ENCODE measurements at regions of chr15 and their contacts with region 1.

Region 1: DNA sequence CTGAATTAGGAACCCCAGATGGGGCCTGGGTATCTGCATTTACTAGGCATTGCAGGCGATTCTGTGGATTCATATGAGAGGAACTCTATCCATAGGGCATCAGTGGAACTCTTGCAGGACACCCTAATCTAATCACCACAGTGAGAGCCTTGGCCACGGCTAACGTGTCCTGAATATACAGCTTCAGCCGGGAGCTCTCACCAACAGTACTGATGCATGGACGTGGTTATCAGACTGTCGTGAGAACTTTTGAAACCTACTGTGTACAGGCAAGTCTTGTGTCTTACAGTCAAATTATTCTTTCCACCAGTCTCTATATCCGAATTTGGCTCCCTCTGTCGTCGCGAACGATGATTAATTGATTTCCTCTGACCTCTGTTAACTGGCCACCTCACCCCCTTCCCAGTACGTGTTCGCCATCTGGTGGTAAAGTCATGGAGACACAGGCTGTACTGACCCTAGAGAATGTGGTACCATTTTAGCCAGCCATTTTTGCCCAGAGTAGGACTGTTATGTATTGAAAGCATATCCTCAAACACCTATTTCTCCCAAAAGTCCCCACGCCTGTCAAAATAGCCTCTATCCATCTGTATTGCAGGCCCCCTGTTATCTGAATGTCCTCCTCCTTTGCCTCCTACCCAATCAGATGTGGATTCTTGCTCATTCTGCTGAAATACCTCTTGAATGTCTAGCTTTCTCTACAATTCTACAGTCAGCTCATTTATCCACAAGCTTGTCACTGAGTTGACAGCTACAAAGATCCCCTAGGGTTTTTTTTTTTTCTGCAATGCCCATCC is 39.7 kb downstream of the GLDN start:
- DNase-seq: peak; percentile 72
- H3K4me3 Mint-ChIP-seq: no peak overlapping the region
- H3K27ac Mint-ChIP-seq: no peak overlapping the region
- H3K4me1 Mint-ChIP-seq: no peaks in the 10 kb centered on the region
- H3K27me3 Mint-ChIP-seq: peaks cover 83% of the 10 kb centered on the region
- CTCF ChIP-seq: peak; percentile 82

Region 2: GRCh38 chr15:51162865-51163762 is 218.1 kb before region 1 on chr15:
- CTCF ChIA-PET with region 1: interaction called, 23 read pairs
- intact Hi-C with region 1: loop called (anchors 1 kb)
- DNase-seq: peak; percentile 78
- H3K4me3 Mint-ChIP-seq: no peak overlapping the region
- H3K27ac Mint-ChIP-seq: no peak overlapping the region
- H3K4me1 Mint-ChIP-seq: no peaks in the 10 kb centered on the region
- H3K27me3 Mint-ChIP-seq: peaks cover 70% of the 10 kb centered on the region
- CTCF ChIP-seq: peak; percentile 92

Region 3: GRCh38 chr15:51229907-51230330 is 151.3 kb before region 1 on chr15:
- CTCF ChIA-PET with region 1: interaction called, 7 read pairs
- intact Hi-C with region 1: loop called (anchors 1 kb)
- DNase-seq: no peak
- H3K4me3 Mint-ChIP-seq: no peak overlapping the region
- H3K27ac Mint-ChIP-seq: no peak overlapping the region
- H3K4me1 Mint-ChIP-seq: peaks cover 13% of the 10 kb centered on the region
- H3K27me3 Mint-ChIP-seq: no peaks in the 10 kb centered on the region
- CTCF ChIP-seq: no peak

Region 4: GRCh38 chr15:51286791-51287190 is 94.4 kb before region 1 on chr15:
- CTCF ChIA-PET with region 1: interaction called, 27 read pairs
- intact Hi-C with region 1: loop called (anchors 1 kb)
- DNase-seq: peak; percentile 23
- H3K4me3 Mint-ChIP-seq: no peak overlapping the region
- H3K27ac Mint-ChIP-seq: no peak overlapping the region
- H3K4me1 Mint-ChIP-seq: peaks cover 15% of the 10 kb centered on the region
- H3K27me3 Mint-ChIP-seq: peaks cover 84% of the 10 kb centered on the region
- CTCF ChIP-seq: no peak

Region 5: DNA sequence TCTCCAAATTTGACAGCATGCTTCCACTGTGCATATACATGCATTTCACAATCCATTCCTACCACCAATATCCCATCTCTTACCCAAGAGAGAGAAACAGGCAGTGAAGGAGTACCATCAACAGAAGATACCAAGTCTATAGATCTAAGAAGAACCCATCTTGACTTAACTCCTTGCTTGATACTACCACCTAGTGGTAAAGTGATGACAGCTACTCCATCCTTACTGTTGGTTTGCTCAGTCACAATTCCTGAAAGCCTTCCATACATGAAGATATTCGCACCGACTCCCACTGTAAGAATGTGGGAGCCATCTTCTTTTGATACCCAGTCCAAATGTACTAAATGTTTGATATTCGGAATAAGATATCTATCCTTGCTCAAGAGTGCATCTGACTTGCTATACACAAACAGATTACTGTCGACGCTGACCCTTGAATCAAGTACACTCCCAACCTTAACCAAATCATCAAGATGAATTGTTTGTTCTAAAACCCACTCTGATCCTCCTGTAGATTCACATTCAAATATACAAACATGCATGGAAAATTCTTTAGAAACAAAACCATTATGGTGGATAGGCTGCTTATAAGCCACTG is 118.3 kb after region 1 on chr15:
- CTCF ChIA-PET with region 1: interaction called, 7 read pairs
- intact Hi-C with region 1: loop called (anchors 1 kb)
- DNase-seq: peak; percentile 11
- H3K4me3 Mint-ChIP-seq: no peak overlapping the region
- H3K27ac Mint-ChIP-seq: no peak overlapping the region
- H3K4me1 Mint-ChIP-seq: peaks cover 13% of the 10 kb centered on the region
- H3K27me3 Mint-ChIP-seq: no peaks in the 10 kb centered on the region
- CTCF ChIP-seq: peak; percentile 35